H1 (cell line): ENCODE measurements at regions of chr5 and their contacts with region 1.

Region 1: GRCh38 chr5:155700333-155700732 is 626.6 kb upstream of the SGCD start:
- DNase-seq: no peak
- H3K4me3 ChIP-seq: no peak overlapping the region
- H3K27ac ChIP-seq: no peak overlapping the region
- H3K4me1 ChIP-seq: no peaks in the 10 kb centered on the region
- H3K27me3 ChIP-seq: no peaks in the 10 kb centered on the region
- CTCF ChIP-seq: peak in 2 of 3 experiments; percentile 55 to 69; a peak in 3 of 4 replicates
- EP300 ChIP-seq: no peak
- POLR2A ChIP-seq: no peak
- RAD21 ChIP-seq: peak; percentile 69 to 80

Region 2: GRCh38 chr5:155616779-155617392 is 83.4 kb before region 1 on chr5:
- CTCF ChIA-PET with region 1: interaction called, 10 read pairs
- POLR2A ChIA-PET with region 1: no interaction called
- DNase-seq: peak; percentile 13 to 90
- H3K4me3 ChIP-seq: no peak overlapping the region
- H3K27ac ChIP-seq: no peak overlapping the region
- H3K4me1 ChIP-seq: peaks cover 0 to 6% (median 2%) of the 10 kb centered on the region in 4 experiments; a peak in 2 of 7 replicates
- H3K27me3 ChIP-seq: no peaks in the 10 kb centered on the region
- CTCF ChIP-seq: peak; percentile 82 to 87 (median 85)
- EP300 ChIP-seq: no peak
- POLR2A ChIP-seq: no peak
- RAD21 ChIP-seq: peak; percentile 97 to 99

Region 3: GRCh38 chr5:155678371-155678770 is 22.0 kb before region 1 on chr5:
- CTCF ChIA-PET with region 1: interaction called, 10 read pairs
- POLR2A ChIA-PET with region 1: no interaction called
- DNase-seq: no peak
- H3K4me3 ChIP-seq: no peak overlapping the region
- H3K27ac ChIP-seq: no peak overlapping the region
- H3K4me1 ChIP-seq: no peaks in the 10 kb centered on the region
- H3K27me3 ChIP-seq: no peaks in the 10 kb centered on the region
- CTCF ChIP-seq: no peak
- EP300 ChIP-seq: no peak
- POLR2A ChIP-seq: no peak
- RAD21 ChIP-seq: no peak

Region 4: GRCh38 chr5:155689406-155689805 is 10.9 kb before region 1 on chr5:
- CTCF ChIA-PET with region 1: interaction called, 12 read pairs
- POLR2A ChIA-PET with region 1: no interaction called
- DNase-seq: no peak
- H3K4me3 ChIP-seq: no peak overlapping the region
- H3K27ac ChIP-seq: no peak overlapping the region
- H3K4me1 ChIP-seq: no peaks in the 10 kb centered on the region
- H3K27me3 ChIP-seq: no peaks in the 10 kb centered on the region
- CTCF ChIP-seq: no peak
- EP300 ChIP-seq: no peak
- POLR2A ChIP-seq: no peak
- RAD21 ChIP-seq: no peak